ENCODE measurements at regions of chr16 and their contacts with region 1.

Region 1: GRCh38 chr16:70433458-70434103 is 5.3 kb downstream of the ST3GAL2 start:
- H3K4me3 Mint-ChIP-seq: peak overlapping the region; percentile 62
- H3K27ac Mint-ChIP-seq: peak overlapping the region; percentile 95
- H3K4me1 Mint-ChIP-seq: peaks cover 82% of the 10 kb centered on the region
- H3K27me3 Mint-ChIP-seq: no peaks in the 10 kb centered on the region

Region 2: GRCh38 chr16:70402916-70403659 is 30.5 kb before region 1 on chr16:
- intact Hi-C with region 1: loop called (anchors 2 kb)
- H3K4me3 Mint-ChIP-seq: no peak overlapping the region
- H3K27ac Mint-ChIP-seq: peak overlapping the region; percentile 73
- H3K4me1 Mint-ChIP-seq: peaks cover 59% of the 10 kb centered on the region
- H3K27me3 Mint-ChIP-seq: no peaks in the 10 kb centered on the region